Breast epithelium (tissue), 4 donors: ENCODE measurements at regions of chr7 and their contacts with region 1.

Region 1: DNA sequence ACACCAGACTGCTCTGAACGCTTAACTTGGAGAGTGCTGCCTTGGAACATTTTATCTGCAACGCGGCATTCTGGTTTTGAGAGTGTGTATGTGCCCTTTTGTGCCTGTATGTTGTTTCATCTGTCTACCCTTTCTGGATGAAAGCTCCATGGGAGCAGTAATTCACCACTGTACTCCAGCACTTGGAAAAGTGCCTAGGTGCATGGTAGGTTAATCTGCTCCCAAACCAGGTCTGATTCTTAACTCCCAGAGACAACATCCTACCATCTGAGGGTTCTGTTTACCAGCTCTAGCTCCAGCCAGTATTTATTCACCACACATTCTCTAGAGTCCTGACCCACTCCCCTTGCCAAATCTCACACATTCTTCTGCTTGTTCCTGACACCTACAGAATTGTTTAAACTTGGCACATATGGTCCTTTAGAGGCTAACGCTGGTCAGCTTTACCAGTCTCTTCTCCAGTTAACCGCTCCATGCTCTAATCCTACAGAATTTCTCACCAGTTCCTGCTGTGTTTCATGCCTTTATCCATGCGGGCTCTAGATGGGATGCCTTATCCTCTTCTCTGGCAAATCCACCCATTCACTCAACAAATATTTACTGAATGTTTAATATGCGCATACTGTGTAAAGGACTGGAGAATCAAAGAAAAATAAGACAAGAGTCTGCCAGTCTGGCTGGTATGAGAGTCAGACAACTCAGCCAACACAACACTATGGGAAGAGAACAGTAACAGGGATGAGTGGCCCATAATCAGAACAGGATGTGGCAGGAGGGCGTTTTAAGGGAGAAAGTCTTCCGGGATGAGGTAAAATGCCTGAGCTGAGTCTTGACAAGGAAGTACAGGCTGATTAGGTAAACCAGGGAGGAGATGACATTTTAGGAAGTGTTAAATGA is 46.3 kb downstream of the MTPN start:
- DNase-seq: no peak
- H3K4me3 ChIP-seq: no peak overlapping the region
- H3K27ac ChIP-seq: no peak overlapping the region
- H3K4me1 ChIP-seq: no peaks in the 10 kb centered on the region
- H3K27me3 ChIP-seq: no peaks in the 10 kb centered on the region
- CTCF ChIP-seq: no peak
- POLR2A ChIP-seq: no peak

Region 2: DNA sequence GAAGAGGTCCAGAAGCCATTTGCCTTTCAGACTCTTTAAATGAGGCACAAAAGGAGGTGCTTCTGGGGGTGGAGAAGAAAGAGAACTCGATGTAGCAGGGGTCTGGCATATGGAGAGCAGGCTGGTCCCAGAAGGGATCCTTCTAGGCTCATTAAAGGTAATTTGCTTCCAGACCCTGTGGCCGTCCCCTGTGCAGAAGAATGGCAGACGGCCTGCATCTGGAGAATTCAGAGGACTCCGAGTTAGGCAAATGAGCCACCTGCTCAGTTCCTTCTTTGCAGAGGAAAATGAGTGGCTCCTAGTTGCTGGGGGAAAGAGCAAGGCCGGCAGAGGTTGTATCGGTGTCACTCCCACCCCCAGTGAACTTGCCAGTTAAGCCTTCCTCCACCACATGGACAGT is 108.4 kb before region 1 on chr7:
- intact Hi-C with region 1: loop called (anchors 5 kb)
- DNase-seq: no peak
- H3K4me3 ChIP-seq: no peak overlapping the region
- H3K27ac ChIP-seq: no peak overlapping the region
- H3K4me1 ChIP-seq: no peaks in the 10 kb centered on the region
- H3K27me3 ChIP-seq: no peaks in the 10 kb centered on the region
- CTCF ChIP-seq: no peak
- POLR2A ChIP-seq: no peak